ENCODE measurements at regions of chr17 and their contacts with region 1.

Region 1: GRCh38 chr17:64420143-64420971 is 28.6 kb upstream of the MILR1 start:
- DNase-seq: peak; percentile 45
- H3K4me3 ChIP-seq: no peak overlapping the region
- CTCF ChIP-seq: peak; percentile 69

Region 2: DNA sequence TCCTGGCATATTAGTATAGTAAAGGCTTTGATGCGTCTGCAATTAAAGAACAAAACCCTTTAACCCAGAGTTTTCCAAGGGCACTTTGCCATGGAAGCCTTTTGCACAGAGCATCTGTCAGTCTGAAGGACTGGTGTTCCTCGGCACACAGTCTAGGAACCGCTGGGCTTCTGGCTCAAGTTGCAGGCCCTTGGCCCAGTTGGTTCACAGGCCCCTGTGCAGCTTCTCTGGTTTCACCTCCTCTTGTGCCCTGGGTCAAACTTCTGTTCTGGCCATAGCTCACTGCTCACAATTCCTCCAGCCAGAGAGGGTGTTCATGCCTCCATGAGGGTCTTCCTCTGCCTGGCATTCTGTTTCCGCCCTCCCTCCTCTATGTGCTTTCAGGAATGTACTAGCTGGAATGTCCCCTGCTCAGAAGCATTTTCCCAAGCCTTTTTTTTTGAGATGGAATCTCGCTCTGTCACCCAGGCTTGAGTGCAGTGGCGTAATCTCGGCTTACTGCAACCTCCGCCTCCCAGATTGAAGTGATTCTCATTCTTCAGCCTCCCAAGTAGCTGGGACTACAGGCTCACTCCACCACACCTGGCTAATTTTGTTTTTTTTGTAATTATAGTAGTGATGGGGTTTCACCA is 122.8 kb before region 1 on chr17:
- CTCF ChIA-PET with region 1: interaction called, 1,075 read pairs
- POLR2A ChIA-PET with region 1: no interaction called
- DNase-seq: no peak
- H3K4me3 ChIP-seq: no peak overlapping the region
- CTCF ChIP-seq: no peak

Region 3: GRCh38 chr17:64339516-64340490 is 80.6 kb before region 1 on chr17:
- CTCF ChIA-PET with region 1: interaction called, 27 read pairs
- POLR2A ChIA-PET with region 1: no interaction called
- DNase-seq: no peak
- H3K4me3 ChIP-seq: no peak overlapping the region
- CTCF ChIP-seq: no peak

Region 4: GRCh38 chr17:64448665-64449512 is 28.5 kb after region 1 on chr17 and contains the start of gene MILR1:
- CTCF ChIA-PET with region 1: interaction called, 10 read pairs
- POLR2A ChIA-PET with region 1: no interaction called
- DNase-seq: peak; percentile 12
- H3K4me3 ChIP-seq: no peak within 1 kb of the TSS
- CTCF ChIP-seq: no peak

Region 5: DNA sequence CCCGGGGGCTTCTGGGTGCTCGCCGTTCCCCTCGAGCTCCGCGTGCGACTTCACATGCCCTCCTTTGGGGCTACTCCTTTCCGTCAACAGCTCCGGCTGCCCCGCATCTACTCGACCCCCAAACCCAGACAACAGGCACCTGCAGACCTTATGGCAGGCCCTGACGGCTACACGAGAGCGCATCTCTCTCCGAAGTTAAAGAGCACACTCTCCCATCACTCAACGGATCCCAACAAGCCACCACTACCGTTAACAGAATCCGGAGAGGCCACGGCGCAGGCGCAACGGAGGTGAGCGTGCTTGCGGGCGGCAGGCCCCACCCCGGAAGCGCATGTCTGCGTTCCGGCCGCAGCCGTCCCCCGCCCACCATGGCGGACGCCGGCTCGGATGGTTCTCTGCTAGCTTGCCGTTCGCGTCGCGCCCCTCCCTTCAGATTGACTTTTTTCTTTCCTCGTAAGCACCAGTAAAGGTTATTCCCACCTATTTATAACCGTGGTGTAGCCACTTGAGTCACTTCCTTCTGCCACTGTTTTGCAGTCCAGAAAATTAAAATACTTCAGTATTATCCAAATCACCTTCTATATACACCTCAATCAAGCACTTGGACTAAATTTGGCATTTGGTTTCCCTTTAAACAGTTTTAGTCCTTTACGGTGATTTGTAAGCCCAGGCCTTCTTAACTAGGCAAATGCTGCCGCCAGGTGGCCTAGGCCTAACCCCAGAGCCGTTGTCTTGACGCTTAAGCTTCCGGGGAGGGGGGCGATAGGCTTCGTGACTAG is 76.6 kb after region 1 on chr17 and contains the start of gene POLG2:
- CTCF ChIA-PET with region 1: interaction called, 451 read pairs
- POLR2A ChIA-PET with region 1: interaction called, 3 read pairs
- DNase-seq: peak; percentile 49
- H3K4me3 ChIP-seq: peak within 1 kb of the TSS; percentile 88
- CTCF ChIP-seq: peak; percentile 53

Region 6: GRCh38 chr17:64964796-64965195 is 544.4 kb after region 1 on chr17:
- CTCF ChIA-PET with region 1: interaction called, 22 read pairs
- POLR2A ChIA-PET with region 1: no interaction called
- DNase-seq: no peak
- H3K4me3 ChIP-seq: no peak overlapping the region
- CTCF ChIP-seq: no peak